AG04449 (cell line): ENCODE measurements at regions of chr12 and their contacts with region 1.

Region 1: DNA sequence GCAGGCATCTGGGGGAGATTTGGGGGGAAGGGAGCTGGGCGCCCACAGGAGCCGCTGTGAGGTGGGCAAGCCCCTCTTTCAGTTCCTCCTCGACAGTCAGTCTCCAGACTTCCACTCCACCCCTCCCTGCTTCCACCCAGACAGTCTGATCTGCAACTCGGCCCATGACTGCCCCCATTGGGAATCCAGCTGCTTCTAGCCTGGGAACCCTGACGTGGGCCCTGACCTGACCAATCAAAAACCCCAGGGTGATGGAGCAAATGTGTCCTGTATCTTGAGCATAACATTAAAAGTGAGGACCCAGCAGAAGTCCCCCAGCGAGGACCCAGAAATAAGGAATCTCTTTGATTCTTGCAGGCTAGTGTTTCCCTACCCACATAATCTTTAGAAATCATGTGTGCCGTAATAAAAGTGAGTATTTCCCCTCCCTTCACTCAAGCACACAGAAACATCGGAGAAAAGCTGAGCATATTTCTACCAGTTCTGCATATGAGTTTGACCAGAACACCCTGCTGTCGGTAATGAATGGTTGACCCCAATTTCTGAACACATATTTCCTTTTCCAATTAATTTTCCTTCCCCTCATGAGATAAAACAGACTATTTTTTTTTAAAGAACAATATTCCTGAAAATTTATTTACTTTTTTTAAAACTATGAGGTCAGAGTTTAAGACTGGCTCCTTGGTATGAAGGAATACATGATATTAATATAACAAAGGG is 6.4 kb downstream of the SSH1 start:
- DNase-seq: no peak
- H3K4me3 ChIP-seq: no peak overlapping the region
- CTCF ChIP-seq: peak; percentile 44

Region 2: GRCh38 chr12:108826101-108826806 is 24.8 kb before region 1 on chr12:
- CTCF ChIA-PET with region 1: interaction called, 11 read pairs
- POLR2A ChIA-PET with region 1: interaction called, 7 read pairs
- DNase-seq: peak; percentile 91
- H3K4me3 ChIP-seq: peak overlapping the region; percentile 38
- CTCF ChIP-seq: peak; percentile 28

Region 3: GRCh38 chr12:108833355-108833733 is 17.7 kb before region 1 on chr12:
- CTCF ChIA-PET with region 1: interaction called, 10 read pairs
- POLR2A ChIA-PET with region 1: interaction called, 47 read pairs
- DNase-seq: peak; percentile 87
- H3K4me3 ChIP-seq: peak overlapping the region; percentile 3
- CTCF ChIP-seq: no peak

Region 4: DNA sequence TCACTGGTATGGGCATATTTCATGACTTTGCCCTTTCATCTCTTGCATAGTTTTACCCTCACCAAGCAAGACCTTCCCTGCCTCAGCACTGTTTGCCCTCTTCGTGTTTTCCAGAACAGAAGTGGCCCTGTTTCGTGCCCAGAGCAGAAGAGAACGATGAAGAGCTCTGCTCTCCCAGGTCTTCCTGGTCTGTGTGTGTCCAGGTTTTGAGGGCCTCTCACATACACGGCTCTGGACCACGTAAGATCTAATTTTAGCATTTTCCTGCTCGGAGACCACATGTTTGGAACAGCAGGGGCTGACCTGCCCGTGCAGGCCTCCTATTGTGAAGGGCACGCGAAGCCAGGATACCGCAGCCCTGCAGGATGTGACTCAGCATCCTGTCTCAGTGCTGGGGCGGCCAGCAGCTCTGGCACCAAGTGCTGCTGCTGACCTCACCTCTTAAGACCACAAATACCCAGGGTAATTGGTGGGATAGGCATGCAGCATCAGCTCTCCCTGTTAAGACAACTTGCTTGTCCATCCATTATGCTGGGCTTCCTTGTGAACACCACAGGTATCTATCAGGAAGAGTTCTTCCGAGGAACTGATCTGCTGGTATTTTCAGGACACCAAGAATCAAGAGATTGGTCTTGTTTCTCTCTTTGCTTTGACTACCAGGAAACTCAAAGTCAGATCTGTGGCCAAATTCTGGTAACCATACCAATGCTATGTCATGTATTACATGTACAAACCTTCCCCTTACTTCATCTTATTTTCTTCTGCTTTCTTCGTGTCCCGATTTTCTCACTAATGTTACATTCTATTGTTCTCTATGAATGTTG is 12.6 kb before region 1 on chr12:
- CTCF ChIA-PET with region 1: interaction called, 10 read pairs
- POLR2A ChIA-PET with region 1: interaction called, 47 read pairs
- DNase-seq: peak; percentile 100
- H3K4me3 ChIP-seq: no peak overlapping the region
- CTCF ChIP-seq: no peak

Region 5: GRCh38 chr12:109331301-109331952 is 480.4 kb after region 1 on chr12:
- CTCF ChIA-PET with region 1: no interaction called
- POLR2A ChIA-PET with region 1: no interaction called
- DNase-seq: no peak
- H3K4me3 ChIP-seq: no peak overlapping the region
- CTCF ChIP-seq: no peak